ENCODE measurements at regions of chr22 and their contacts with region 1.

Region 1: GRCh38 chr22:28594797-28595462 is 84.7 kb downstream of the TTC28 start:
- DNase-seq: peak; percentile 54
- ATAC-seq: peak; percentile 82
- H3K4me3 ChIP-seq: no peak overlapping the region
- H3K27ac ChIP-seq: no peak overlapping the region
- H3K4me1 ChIP-seq: no peaks in the 10 kb centered on the region
- H3K27me3 ChIP-seq: no peaks in the 10 kb centered on the region
- CTCF ChIP-seq: peak; percentile 74
- EP300 ChIP-seq: no peak
- POLR2A ChIP-seq: no peak
- RAD21 ChIP-seq: peak; percentile 64

Region 2: DNA sequence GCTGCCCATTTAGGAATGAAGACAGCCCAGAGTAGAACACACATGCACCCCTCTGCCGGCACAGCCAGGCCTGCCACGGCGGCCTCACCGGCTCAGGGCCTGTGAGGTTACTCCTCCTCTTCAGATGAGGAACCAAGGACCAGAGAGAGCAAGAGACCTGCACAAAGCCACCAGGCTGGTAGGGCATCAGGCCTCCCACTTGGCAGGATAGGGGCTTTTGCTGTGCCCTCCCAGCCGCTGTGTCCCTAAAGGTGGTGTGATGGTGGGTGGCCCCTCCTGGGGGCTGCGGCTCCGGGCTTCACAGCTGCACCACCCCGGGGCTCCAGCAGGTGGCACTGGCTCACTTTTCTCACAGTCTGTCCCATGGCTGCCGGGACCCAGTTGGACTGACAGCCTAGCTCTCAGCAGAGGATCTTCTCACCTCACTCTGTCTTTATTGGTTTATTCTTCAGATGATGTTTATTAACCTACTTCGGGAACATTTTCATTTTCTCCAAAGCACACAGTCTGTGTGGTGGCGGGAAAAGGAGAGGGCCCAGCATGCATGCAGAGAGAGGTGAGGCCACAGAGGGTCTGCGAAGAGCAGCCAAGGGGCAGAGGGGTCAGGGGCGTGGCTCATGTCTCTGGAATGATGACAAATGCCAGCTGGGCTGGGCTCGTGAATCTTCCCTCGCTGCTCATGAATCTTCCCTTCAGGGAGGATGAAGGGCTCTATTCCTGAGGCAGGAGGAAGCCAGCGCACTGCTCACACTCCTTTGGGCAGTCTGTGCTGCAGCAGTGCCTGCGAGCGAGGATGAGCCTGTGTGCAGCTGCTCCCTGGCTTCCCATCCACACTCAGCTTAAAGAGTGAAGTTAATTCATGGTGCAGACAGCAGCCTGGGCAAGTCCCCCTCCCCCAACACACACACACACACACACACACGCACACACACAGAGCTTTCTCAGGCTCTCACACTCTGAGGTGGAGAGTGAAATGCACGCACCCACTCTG is 574.8 kb before region 1 on chr22:
- CTCF ChIA-PET with region 1: interaction called, 6 read pairs
- POLR2A ChIA-PET with region 1: no interaction called
- in situ Hi-C with region 1: loop called (anchors 5 kb)
- intact Hi-C with region 1: loop called (anchors 1 kb)
- DNase-seq: peak; percentile 30
- ATAC-seq: peak; percentile 89
- H3K4me3 ChIP-seq: no peak overlapping the region
- H3K27ac ChIP-seq: no peak overlapping the region
- H3K4me1 ChIP-seq: no peaks in the 10 kb centered on the region
- H3K27me3 ChIP-seq: no peaks in the 10 kb centered on the region
- CTCF ChIP-seq: peak; percentile 88
- EP300 ChIP-seq: no peak
- POLR2A ChIP-seq: no peak
- RAD21 ChIP-seq: peak; percentile 75

Region 3: GRCh38 chr22:28051787-28052356 is 543.1 kb before region 1 on chr22:
- CTCF ChIA-PET with region 1: interaction called, 31 read pairs
- POLR2A ChIA-PET with region 1: no interaction called
- in situ Hi-C with region 1: loop called (anchors 5 kb)
- intact Hi-C with region 1: loop called (anchors 1 kb)
- DNase-seq: peak; percentile 43
- ATAC-seq: peak; percentile 77
- H3K4me3 ChIP-seq: no peak overlapping the region
- H3K27ac ChIP-seq: no peak overlapping the region
- H3K4me1 ChIP-seq: peaks cover 7% of the 10 kb centered on the region
- H3K27me3 ChIP-seq: no peaks in the 10 kb centered on the region
- CTCF ChIP-seq: peak; percentile 80
- EP300 ChIP-seq: no peak
- POLR2A ChIP-seq: no peak
- RAD21 ChIP-seq: peak; percentile 64

Region 4: DNA sequence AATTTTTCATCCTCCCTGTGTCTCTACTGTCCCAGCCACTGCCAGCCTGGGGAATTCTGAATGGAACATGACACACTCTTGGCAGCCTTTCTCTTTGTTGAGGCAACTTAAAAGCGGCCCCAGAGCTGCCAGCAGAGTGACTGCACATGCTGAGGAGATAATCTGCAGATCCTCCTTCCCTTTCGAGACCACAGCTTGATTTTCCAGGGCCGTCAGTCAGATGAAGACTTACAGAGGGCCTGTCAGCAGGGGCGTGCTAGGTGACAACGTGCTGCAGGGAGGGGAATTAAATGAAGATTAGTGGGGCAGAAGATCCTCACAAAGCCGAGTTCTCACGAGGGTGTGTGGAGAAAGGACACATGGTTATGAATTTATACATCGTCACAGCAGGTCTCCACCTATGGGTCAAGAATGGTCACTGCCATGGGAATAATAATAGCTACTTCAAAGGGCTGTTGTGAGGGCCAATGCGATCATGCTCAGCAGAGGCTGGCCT is 482.3 kb before region 1 on chr22:
- CTCF ChIA-PET with region 1: no interaction called
- POLR2A ChIA-PET with region 1: no interaction called
- in situ Hi-C with region 1: no loop called
- intact Hi-C with region 1: no loop called
- DNase-seq: peak; percentile 25
- ATAC-seq: peak; percentile 84
- H3K4me3 ChIP-seq: no peak overlapping the region
- H3K27ac ChIP-seq: no peak overlapping the region
- H3K4me1 ChIP-seq: no peaks in the 10 kb centered on the region
- H3K27me3 ChIP-seq: no peaks in the 10 kb centered on the region
- CTCF ChIP-seq: peak; percentile 60
- EP300 ChIP-seq: no peak
- POLR2A ChIP-seq: no peak
- RAD21 ChIP-seq: no peak

Region 5: DNA sequence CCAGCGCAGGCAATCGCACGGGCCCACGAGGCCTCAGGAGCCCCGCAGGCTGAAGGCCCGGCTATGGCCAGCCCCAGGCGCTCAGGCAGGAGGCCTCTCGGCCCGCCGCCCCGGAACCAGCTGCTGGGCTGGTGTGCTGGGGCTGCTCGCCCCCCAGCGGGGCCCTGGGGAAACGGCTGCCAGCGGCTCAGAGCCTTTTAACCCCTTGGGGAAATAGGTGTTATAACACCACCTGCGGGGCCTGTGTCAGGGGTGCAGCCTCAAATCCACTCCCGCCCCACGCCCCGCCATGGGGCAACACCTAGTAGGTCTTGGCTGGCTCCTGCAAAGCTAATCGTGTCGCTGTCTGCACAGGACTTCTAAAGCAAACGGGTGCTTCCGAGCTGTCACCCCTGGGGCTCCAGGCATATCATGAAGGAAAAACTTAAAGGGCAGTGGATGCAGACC is 152.6 kb before region 1 on chr22:
- CTCF ChIA-PET with region 1: interaction called, 3 read pairs
- POLR2A ChIA-PET with region 1: no interaction called
- in situ Hi-C with region 1: no loop called
- intact Hi-C with region 1: loop called (anchors 1 kb)
- DNase-seq: peak; percentile 74
- ATAC-seq: peak; percentile 99
- H3K4me3 ChIP-seq: peak overlapping the region; percentile 45 to 74 (median 54)
- H3K27ac ChIP-seq: peak overlapping the region; percentile 81
- H3K4me1 ChIP-seq: peaks cover 21% of the 10 kb centered on the region
- H3K27me3 ChIP-seq: no peaks in the 10 kb centered on the region
- CTCF ChIP-seq: peak; percentile 94
- EP300 ChIP-seq: no peak
- POLR2A ChIP-seq: no peak
- RAD21 ChIP-seq: peak; percentile 98

Region 6: GRCh38 chr22:28570691-28571373 is 24.1 kb before region 1 on chr22:
- CTCF ChIA-PET with region 1: no interaction called
- POLR2A ChIA-PET with region 1: no interaction called
- in situ Hi-C with region 1: no loop called
- intact Hi-C with region 1: no loop called
- DNase-seq: no peak
- ATAC-seq: no peak
- H3K4me3 ChIP-seq: no peak overlapping the region
- H3K27ac ChIP-seq: no peak overlapping the region
- H3K4me1 ChIP-seq: peaks cover 26% of the 10 kb centered on the region
- H3K27me3 ChIP-seq: no peaks in the 10 kb centered on the region
- CTCF ChIP-seq: no peak
- EP300 ChIP-seq: no peak
- POLR2A ChIP-seq: no peak
- RAD21 ChIP-seq: no peak

Region 7: DNA sequence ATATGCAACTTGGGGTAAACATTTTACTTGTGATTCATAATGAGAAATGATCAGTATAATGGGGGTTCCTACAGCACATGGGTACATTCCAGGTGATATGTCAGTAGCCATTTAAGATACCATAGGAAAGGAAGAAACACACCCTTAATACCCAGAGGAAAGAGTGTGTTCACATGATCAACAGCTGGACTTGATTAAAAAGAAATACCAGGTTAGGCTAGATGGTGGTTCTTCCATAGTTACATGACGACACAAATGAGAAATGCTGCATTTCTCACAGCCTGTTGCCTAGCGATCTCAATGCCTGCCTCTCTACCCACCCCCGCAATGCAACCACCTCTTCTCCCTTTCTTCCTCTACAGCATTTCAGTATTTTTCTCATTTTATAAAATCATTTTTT is 12.1 kb before region 1 on chr22:
- CTCF ChIA-PET with region 1: no interaction called
- POLR2A ChIA-PET with region 1: no interaction called
- in situ Hi-C with region 1: no loop called
- intact Hi-C with region 1: no loop called
- DNase-seq: no peak
- ATAC-seq: no peak
- H3K4me3 ChIP-seq: no peak overlapping the region
- H3K27ac ChIP-seq: no peak overlapping the region
- H3K4me1 ChIP-seq: no peaks in the 10 kb centered on the region
- H3K27me3 ChIP-seq: no peaks in the 10 kb centered on the region
- CTCF ChIP-seq: no peak
- EP300 ChIP-seq: no peak
- POLR2A ChIP-seq: no peak
- RAD21 ChIP-seq: no peak

Measured in HepG2 (cell line).